ENCODE measurements at regions of chr7 and their contacts with region 1.

Region 1: DNA sequence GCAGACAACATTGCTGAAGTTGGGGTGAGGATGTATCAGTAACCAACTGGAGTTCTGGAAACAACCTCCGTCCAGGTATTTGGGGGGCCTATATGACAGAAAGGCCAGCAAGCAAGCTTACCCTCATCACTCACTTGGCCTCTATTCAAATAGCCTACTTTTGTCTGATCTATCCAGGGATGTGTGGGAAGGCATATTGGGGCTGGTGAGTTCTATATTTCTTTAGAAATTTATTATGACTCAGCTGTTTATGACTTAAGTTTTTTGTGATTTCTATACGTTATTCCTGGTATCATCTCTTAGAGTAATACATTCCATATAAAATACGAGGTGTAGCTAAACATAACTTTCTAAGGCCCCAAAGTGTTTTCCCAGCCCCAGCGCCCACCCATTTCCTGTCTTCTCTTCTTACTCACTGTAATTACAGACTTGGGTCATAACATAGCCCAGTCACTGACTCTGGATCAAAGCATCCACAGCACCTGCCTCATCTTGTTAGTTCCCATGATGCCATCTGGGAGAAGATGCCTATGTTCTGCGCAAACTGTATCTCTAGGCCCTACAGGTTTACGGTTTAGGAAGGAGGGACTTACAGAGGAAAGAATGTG is 18.1 kb downstream of the GARS1 start:
- DNase-seq: no peak
- H3K4me3 Mint-ChIP-seq: peak overlapping the region; percentile 41
- H3K27ac Mint-ChIP-seq: peak overlapping the region; percentile 55
- H3K4me1 Mint-ChIP-seq: peaks cover 35% of the 10 kb centered on the region
- H3K27me3 Mint-ChIP-seq: no peaks in the 10 kb centered on the region

Region 2: DNA sequence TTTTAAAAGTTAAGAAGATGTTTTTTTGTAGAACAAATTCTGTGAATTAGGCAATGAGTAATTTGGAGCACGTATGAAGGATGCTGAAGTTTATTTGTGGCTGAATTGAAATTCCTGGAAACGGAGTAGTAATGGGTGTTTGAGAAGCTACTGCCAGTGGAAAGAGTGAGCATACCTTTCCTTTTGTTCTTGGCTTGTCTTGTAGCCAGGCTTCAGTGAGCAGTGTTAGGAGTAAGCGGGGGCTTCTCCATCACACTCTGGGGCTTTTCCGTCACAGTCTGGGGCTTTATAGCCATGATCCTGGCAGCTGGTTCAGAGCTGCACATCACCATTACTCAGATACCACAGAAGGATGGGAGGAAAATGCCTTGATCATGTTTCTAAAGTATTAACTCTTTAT is 14.3 kb after region 1 on chr7:
- intact Hi-C with region 1: loop called (anchors 2 kb)
- DNase-seq: no peak
- H3K4me3 Mint-ChIP-seq: no peak overlapping the region
- H3K27ac Mint-ChIP-seq: peak overlapping the region; percentile 88
- H3K4me1 Mint-ChIP-seq: peaks cover 19% of the 10 kb centered on the region
- H3K27me3 Mint-ChIP-seq: no peaks in the 10 kb centered on the region

Region 3: GRCh38 chr7:30682212-30683083 is 69.7 kb after region 1 on chr7 and contains the start of gene CRHR2:
- intact Hi-C with region 1: loop called (anchors 2 kb)
- DNase-seq: peak; percentile 10
- H3K4me3 Mint-ChIP-seq: peak within 1 kb of the TSS; percentile 65
- H3K27ac Mint-ChIP-seq: no peak within 1 kb of the TSS
- H3K4me1 Mint-ChIP-seq: peaks cover 5% of the 10 kb centered on the region
- H3K27me3 Mint-ChIP-seq: peaks cover 63% of the 10 kb centered on the region
- total RNA-seq, gene CRHR2: not detected in 2 replicates